ENCODE measurements at regions of chr5 and their contacts with region 1.

Region 1: DNA sequence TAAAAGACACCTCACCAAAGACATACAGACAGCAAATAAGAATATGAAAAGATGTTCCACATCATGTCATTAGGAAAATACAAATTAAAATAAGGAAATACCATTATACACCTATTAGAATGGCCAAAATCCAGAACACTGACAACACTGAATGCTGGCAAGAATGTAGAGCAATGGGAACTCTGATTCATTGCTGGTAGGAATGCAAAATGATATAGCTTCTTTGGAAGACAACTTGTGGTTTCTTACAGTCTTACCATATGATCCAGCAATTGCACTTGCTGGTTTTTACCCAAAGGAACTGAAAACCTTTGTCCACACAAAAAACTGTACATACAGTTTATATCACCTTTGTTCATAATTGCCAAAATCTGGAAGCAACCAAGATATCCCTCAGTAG is 6.5 kb downstream of the TMEM161B start:
- DNase-seq: no peak
- H3K4me3 Mint-ChIP-seq: no peak overlapping the region
- H3K27ac Mint-ChIP-seq: peak overlapping the region; percentile 48
- H3K4me1 Mint-ChIP-seq: peaks cover 43% of the 10 kb centered on the region
- H3K27me3 Mint-ChIP-seq: no peaks in the 10 kb centered on the region

Region 2: DNA sequence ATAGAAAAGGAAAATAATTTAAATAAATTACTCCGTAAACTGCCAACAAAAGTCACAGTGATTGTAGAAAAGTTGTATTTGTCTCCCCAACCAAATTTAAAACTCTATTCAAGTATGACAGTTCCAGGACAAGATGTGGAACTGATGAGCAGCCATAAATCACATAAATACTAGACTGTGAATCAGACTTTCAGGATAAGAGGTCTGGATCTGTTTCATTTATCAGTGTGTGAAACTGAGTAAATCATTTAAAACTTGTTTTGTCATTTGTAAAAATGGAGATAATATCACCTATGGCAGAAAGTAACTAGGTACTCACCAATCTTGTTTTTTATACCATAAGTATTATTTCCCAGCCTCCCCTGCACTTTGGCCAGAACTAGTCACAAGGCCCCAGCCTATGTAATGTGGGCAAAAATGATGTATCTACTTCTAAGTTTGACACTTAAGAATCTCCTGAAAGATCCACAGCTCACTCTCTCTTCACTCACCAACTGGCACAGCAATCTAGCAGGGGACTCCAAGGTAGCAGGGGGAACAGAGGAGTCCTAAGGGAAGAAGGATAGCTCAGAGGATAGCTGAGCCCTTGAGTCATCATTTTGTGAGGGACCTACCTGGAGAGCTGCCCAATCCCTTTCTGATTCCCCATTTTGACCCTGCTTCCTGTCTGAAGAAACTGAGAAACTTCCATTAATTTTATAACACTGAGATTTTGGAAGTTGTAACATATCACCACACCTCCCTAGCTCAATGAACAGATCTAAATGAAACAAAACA is 25.1 kb before region 1 on chr5:
- intact Hi-C with region 1: loop called (anchors 1 kb)
- DNase-seq: no peak
- H3K4me3 Mint-ChIP-seq: no peak overlapping the region
- H3K27ac Mint-ChIP-seq: peak overlapping the region; percentile 63
- H3K4me1 Mint-ChIP-seq: peaks cover 22% of the 10 kb centered on the region
- H3K27me3 Mint-ChIP-seq: no peaks in the 10 kb centered on the region